Gastrocnemius medialis (tissue), 4 donors: ENCODE measurements at regions of chr3 and their contacts with region 1.

Region 1: GRCh38 chr3:140395134-140396075 is 282.5 kb upstream of the TRIM42 start:
- DNase-seq: no peak
- ATAC-seq: peak in 1 of 2 donors; percentile 36
- H3K4me3 ChIP-seq: no peak overlapping the region
- H3K27ac ChIP-seq: no peak overlapping the region
- H3K4me1 ChIP-seq: no peaks in the 10 kb centered on the region
- H3K27me3 ChIP-seq: no peaks in the 10 kb centered on the region
- CTCF ChIP-seq: no peak
- POLR2A ChIP-seq: no peak

Region 2: DNA sequence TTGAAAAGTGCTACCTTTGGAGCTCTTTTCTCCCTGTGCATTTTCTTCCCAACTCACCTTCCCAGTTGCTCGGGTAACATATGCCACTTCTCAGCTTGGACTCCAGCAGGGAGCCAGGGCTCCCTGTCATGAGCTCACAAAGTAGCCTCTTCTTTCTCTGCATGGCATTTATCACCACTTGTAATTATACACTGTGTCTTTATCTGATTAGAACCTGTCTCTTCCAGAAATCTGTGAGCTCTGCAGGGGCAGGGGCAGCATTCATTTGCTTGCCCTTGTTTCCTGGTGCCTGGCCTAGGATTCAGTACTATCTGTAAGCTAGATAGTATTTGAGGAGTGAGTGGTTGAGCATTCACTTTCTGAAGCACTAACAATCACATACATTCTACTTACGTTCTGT is 359.5 kb before region 1 on chr3:
- in situ Hi-C with region 1: no loop called
- intact Hi-C with region 1: no loop called
- DNase-seq: no peak
- ATAC-seq: no peak
- H3K4me3 ChIP-seq: no peak overlapping the region
- H3K27ac ChIP-seq: no peak overlapping the region
- H3K4me1 ChIP-seq: no peaks in the 10 kb centered on the region
- H3K27me3 ChIP-seq: no peaks in the 10 kb centered on the region
- CTCF ChIP-seq: no peak
- POLR2A ChIP-seq: no peak

Region 3: GRCh38 chr3:140258222-140258724 is 137.1 kb before region 1 on chr3:
- in situ Hi-C with region 1: no loop called
- intact Hi-C with region 1: no loop called
- DNase-seq: no peak
- ATAC-seq: no peak
- H3K4me3 ChIP-seq: no peak overlapping the region
- H3K27ac ChIP-seq: no peak overlapping the region
- H3K4me1 ChIP-seq: no peaks in the 10 kb centered on the region
- H3K27me3 ChIP-seq: no peaks in the 10 kb centered on the region
- CTCF ChIP-seq: no peak
- POLR2A ChIP-seq: no peak

Region 4: GRCh38 chr3:140332131-140332530 is 63.3 kb before region 1 on chr3:
- in situ Hi-C with region 1: loop called in 1 of 4 experiments (anchors 10 kb)
- intact Hi-C with region 1: no loop called
- DNase-seq: no peak
- ATAC-seq: no peak
- H3K4me3 ChIP-seq: no peak overlapping the region
- H3K27ac ChIP-seq: no peak overlapping the region
- H3K4me1 ChIP-seq: no peaks in the 10 kb centered on the region
- H3K27me3 ChIP-seq: no peaks in the 10 kb centered on the region
- CTCF ChIP-seq: no peak
- POLR2A ChIP-seq: no peak

Region 5: DNA sequence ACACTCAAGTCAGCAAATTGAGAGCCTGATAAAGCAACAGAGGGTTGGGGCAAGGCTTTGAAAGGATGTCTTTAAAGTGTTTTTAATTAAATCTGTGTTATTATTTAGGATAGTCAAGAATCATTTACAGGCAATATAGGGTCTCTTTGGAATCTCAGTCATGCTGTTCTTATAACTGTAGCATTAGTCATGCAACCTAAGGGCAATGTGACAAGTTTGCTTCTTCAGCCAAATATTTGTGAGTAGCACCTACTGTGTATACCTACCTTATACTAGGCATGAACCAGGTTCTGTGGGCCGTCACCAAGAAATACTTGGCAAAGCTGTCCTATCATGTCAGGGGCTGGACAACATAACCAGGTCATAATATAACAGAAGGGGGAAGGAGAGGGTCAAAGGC is 97.9 kb after region 1 on chr3:
- in situ Hi-C with region 1: no loop called
- intact Hi-C with region 1: no loop called
- DNase-seq: no peak
- ATAC-seq: no peak
- H3K4me3 ChIP-seq: no peak overlapping the region
- H3K27ac ChIP-seq: no peak overlapping the region
- H3K4me1 ChIP-seq: no peaks in the 10 kb centered on the region
- H3K27me3 ChIP-seq: no peaks in the 10 kb centered on the region
- CTCF ChIP-seq: no peak
- POLR2A ChIP-seq: no peak

Region 6: DNA sequence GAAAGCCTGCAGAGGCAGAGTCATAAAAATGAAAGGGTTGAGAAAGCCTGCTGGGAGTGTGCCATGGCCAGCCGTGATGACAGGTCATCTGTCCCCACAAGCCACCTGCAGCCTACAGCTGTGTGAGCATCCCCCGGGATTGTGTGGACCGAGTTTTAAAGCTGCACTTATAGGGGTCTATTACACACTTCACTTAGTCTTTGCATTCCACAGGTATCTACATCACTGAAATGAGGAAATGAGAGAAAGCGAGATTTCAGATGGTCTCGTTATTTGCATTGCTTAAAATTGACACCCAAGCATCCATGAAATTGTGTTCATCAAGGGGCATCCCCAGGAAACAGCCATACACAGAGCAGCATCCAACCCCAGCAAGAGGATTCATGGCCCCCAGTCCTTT is 144.9 kb after region 1 on chr3:
- in situ Hi-C with region 1: no loop called
- intact Hi-C with region 1: no loop called
- DNase-seq: no peak
- ATAC-seq: no peak
- H3K4me3 ChIP-seq: no peak overlapping the region
- H3K27ac ChIP-seq: no peak overlapping the region
- H3K4me1 ChIP-seq: no peaks in the 10 kb centered on the region
- H3K27me3 ChIP-seq: no peaks in the 10 kb centered on the region
- CTCF ChIP-seq: no peak
- POLR2A ChIP-seq: no peak